ENCODE measurements at regions of chr11 and their contacts with region 1.

Region 1: DNA sequence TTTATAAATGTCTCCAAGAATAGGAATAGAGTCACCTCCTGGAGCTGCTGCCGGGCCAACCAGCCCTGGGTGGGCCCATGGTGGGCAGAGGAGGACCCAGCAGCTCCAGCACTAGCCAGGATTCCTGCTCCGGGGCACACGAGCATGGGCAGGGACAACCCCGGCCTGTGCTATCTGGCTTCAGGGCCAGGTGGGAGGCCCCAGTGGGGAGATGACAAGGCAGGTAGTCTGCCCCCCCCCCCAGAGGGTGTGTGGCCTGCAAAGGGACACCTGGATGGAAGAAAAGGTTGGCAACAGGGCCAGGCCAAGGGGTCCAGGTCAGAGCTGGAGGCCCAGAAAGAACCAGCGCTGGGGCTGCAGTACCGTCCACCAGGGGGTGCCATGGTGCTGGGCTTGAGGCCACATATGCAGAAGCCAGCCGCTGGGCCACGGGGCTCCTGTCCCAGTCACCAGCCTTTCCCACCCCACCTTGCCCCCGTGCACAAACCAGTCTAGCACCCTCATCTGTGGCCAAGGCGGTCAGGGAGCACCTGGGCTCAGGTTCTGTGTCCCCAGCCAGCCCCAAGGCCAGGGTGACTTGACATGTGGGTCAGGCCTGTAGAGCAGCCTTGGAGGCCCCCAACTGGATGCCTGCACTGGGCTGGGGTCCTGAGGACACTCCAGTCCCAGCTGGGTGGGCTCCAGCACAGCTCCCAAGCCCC is 3.5 kb downstream of the TSPAN32 start:
- DNase-seq: peak; percentile 91
- H3K4me3 Mint-ChIP-seq: no peak overlapping the region
- H3K27ac Mint-ChIP-seq: no peak overlapping the region
- H3K4me1 Mint-ChIP-seq: peaks cover 44% of the 10 kb centered on the region
- H3K27me3 Mint-ChIP-seq: no peaks in the 10 kb centered on the region

Region 2: DNA sequence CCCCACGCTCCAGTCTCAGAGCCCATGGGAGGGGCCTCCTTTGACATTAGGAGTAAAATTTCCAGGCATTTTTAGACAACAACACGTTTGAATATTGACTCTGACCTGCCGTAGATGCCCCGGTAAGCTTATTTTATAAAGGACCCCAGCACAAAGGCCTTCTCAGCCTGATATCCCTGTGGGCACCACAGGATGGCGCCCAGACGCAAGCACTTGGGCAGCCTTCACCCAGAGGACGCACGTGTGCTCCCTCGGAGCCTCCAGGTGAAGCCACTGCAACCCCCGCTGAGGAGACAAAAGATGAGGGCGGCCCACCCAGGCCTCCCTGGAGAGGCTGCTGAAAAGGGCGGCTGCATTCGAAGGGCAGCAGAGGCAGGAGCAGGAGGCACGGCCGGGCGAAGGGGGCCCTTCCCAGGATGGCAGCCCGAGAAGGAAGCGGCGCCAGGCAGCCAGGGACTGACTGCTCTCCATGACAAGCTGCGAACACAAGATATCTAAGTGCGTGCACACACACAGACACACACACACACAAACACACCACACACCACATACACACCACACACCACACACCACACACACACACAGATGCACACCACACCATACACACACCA is 118.5 kb before region 1 on chr11:
- CTCF ChIA-PET with region 1: interaction called, 5 read pairs
- intact Hi-C with region 1: loop called (anchors 2 kb)
- DNase-seq: peak; percentile 64
- H3K4me3 Mint-ChIP-seq: no peak overlapping the region
- H3K27ac Mint-ChIP-seq: no peak overlapping the region
- H3K4me1 Mint-ChIP-seq: peaks cover 5% of the 10 kb centered on the region
- H3K27me3 Mint-ChIP-seq: no peaks in the 10 kb centered on the region

Region 3: GRCh38 chr11:2196970-2197770 is 108.1 kb before region 1 on chr11:
- CTCF ChIA-PET with region 1: interaction called, 29 read pairs
- intact Hi-C with region 1: no loop called
- DNase-seq: peak; percentile 82
- H3K4me3 Mint-ChIP-seq: no peak overlapping the region
- H3K27ac Mint-ChIP-seq: no peak overlapping the region
- H3K4me1 Mint-ChIP-seq: no peaks in the 10 kb centered on the region
- H3K27me3 Mint-ChIP-seq: no peaks in the 10 kb centered on the region

Region 4: GRCh38 chr11:2377511-2378443 is 72.5 kb after region 1 on chr11:
- CTCF ChIA-PET with region 1: interaction called, 4 read pairs
- intact Hi-C with region 1: loop called (anchors 1 kb)
- DNase-seq: peak; percentile 56
- H3K4me3 Mint-ChIP-seq: peak overlapping the region; percentile 84
- H3K27ac Mint-ChIP-seq: peak overlapping the region; percentile 79
- H3K4me1 Mint-ChIP-seq: peaks cover 32% of the 10 kb centered on the region
- H3K27me3 Mint-ChIP-seq: no peaks in the 10 kb centered on the region

Region 5: GRCh38 chr11:2387266-2387987 is 82.1 kb after region 1 on chr11:
- CTCF ChIA-PET with region 1: interaction called, 16 read pairs
- intact Hi-C with region 1: no loop called
- DNase-seq: no peak
- H3K4me3 Mint-ChIP-seq: no peak overlapping the region
- H3K27ac Mint-ChIP-seq: no peak overlapping the region
- H3K4me1 Mint-ChIP-seq: peaks cover 47% of the 10 kb centered on the region
- H3K27me3 Mint-ChIP-seq: no peaks in the 10 kb centered on the region

Region 6: DNA sequence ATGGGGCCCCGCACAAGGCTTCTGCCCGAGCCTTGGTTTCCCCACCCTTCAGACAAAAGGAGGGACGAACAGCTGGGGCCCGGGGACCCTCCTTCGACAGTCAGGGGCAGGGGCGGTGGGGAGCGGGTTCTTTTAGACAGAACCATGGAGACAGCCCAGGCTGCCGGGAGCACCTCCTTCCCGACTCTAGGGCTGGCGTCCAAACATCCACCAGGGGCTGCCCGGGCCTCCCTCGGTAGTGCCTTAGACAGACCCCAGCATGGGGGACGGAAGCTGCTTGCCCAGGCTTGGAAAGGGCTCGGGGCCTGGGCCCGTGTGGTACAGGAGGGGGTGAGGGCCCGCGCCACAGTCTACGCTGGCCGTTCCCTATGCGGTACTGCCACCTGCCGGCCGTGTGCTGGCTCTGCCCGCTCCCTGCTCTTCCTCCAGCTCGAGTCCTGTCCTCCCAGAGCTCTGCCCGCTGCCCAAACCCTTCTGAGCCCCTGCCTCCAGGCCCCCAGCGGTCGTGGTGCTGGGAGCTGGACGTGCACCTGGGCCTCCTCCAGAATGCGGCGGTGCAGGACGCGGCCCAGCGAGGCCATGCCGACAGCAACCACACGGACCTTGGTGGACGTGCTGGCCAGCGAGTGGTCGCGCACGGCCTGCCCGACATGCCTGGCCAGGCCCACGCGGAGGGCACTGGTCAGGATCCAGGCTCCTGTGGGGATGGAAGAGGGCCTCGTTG is 115.4 kb after region 1 on chr11:
- CTCF ChIA-PET with region 1: interaction called, 197 read pairs
- intact Hi-C with region 1: loop called (anchors 1 kb)
- DNase-seq: peak; percentile 75
- H3K4me3 Mint-ChIP-seq: no peak overlapping the region
- H3K27ac Mint-ChIP-seq: no peak overlapping the region
- H3K4me1 Mint-ChIP-seq: peaks cover 2% of the 10 kb centered on the region
- H3K27me3 Mint-ChIP-seq: no peaks in the 10 kb centered on the region

Region 7: DNA sequence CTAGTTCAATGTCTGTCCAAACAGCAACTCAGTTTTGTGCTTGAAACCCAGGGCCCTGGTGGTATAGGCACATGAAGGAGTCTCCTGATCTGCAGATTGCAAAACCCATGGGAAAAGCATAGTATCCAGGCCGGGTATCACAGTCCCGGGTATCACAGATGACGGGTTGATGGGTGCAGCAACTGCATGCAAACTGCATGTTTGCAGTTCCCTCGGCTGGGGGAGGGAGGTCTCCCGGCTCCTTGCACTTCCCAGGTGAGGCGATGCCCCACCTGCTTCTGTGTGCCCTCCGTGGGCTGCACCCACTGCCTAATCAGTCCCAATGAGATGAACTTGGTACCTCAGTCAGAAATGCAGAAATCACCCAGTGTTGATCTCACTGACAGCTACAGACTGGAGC is 193.5 kb after region 1 on chr11:
- CTCF ChIA-PET with region 1: no interaction called
- intact Hi-C with region 1: no loop called
- DNase-seq: no peak
- H3K4me3 Mint-ChIP-seq: no peak overlapping the region
- H3K27ac Mint-ChIP-seq: no peak overlapping the region
- H3K4me1 Mint-ChIP-seq: no peaks in the 10 kb centered on the region
- H3K27me3 Mint-ChIP-seq: no peaks in the 10 kb centered on the region

Measured in activated naive CD4-positive, alpha-beta T cell treated with anti-CD3 and anti-CD28 coated beads for 36 hours (primary cell).